Prostate gland (tissue), 2 donors: ENCODE measurements at regions of chr7 and their contacts with region 1.

Region 1: GRCh38 chr7:1225441-1226185 is 7.1 kb upstream of the UNCX start:
- DNase-seq: no peak
- H3K4me3 ChIP-seq: no peak overlapping the region
- H3K27ac ChIP-seq: no peak overlapping the region
- H3K4me1 ChIP-seq: no peaks in the 10 kb centered on the region
- H3K27me3 ChIP-seq: peaks cover 66% of the 10 kb centered on the region
- CTCF ChIP-seq: peak; percentile 54 to 70 (median 62)
- POLR2A ChIP-seq: no peak

Region 2: GRCh38 chr7:1473864-1474512 is 248.4 kb after region 1 on chr7:
- intact Hi-C with region 1: loop called (anchors 5 kb)
- DNase-seq: peak; percentile 91
- H3K4me3 ChIP-seq: no peak overlapping the region
- H3K27ac ChIP-seq: no peak overlapping the region
- H3K4me1 ChIP-seq: no peaks in the 10 kb centered on the region
- H3K27me3 ChIP-seq: no peaks in the 10 kb centered on the region
- CTCF ChIP-seq: peak; percentile 94 to 98 (median 96)
- POLR2A ChIP-seq: no peak